ENCODE measurements at regions of chr21 and their contacts with region 1.

Region 1: GRCh38 chr21:42892931-42893755 is at the start of gene NDUFV3:
- DNase-seq: peak; percentile 90
- ATAC-seq: peak; percentile 97
- H3K4me3 ChIP-seq: peak within 1 kb of the TSS; percentile 84
- H3K27ac ChIP-seq: peak within 1 kb of the TSS; percentile 80
- H3K4me1 ChIP-seq: peaks cover 3% of the 10 kb centered on the region
- H3K27me3 ChIP-seq: no peaks in the 10 kb centered on the region
- CTCF ChIP-seq: no peak
- EP300 ChIP-seq: no peak
- POLR2A ChIP-seq: peak; percentile 99
- RAD21 ChIP-seq: no peak
- polyA plus RNA-seq, gene NDUFV3: 7.0 to 9.1 TPM

Region 2: DNA sequence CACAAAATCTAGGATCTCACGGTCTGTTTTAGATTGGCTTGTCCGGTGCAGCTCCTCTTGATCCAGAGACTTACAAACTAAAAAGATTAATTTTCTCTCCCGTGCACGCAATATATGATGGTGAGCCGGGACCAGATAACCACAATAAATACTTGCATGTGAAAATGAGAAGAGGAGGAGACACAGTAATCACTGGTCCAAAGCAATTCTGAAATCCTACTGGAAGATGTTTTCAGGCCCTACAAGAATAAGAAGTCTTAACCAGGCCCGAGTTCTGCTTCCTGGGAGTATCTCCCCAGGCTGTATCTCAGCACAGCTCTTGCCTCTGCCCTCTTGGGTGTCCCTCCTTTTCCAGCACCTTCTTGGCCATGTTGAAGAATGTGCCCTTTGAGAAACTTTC is 12.8 kb before region 1 on chr21:
- CTCF ChIA-PET with region 1: interaction called, 4 read pairs
- POLR2A ChIA-PET with region 1: interaction called, 10 read pairs
- RAD21 ChIA-PET with region 1: interaction called, 6 read pairs
- SMC1A ChIA-PET with region 1: interaction called, 3 read pairs
- in situ Hi-C with region 1: no loop called
- intact Hi-C with region 1: no loop called
- DNase-seq: no peak
- ATAC-seq: no peak
- H3K4me3 ChIP-seq: peak overlapping the region; percentile 83
- H3K27ac ChIP-seq: peak overlapping the region; percentile 93
- H3K4me1 ChIP-seq: 0 out of 2 replicates have a peak, but pooled peaks cover 2% of the 10 kb centered on the region
- H3K27me3 ChIP-seq: no peaks in the 10 kb centered on the region
- CTCF ChIP-seq: no peak
- EP300 ChIP-seq: no peak
- POLR2A ChIP-seq: no peak
- RAD21 ChIP-seq: no peak

Region 3: DNA sequence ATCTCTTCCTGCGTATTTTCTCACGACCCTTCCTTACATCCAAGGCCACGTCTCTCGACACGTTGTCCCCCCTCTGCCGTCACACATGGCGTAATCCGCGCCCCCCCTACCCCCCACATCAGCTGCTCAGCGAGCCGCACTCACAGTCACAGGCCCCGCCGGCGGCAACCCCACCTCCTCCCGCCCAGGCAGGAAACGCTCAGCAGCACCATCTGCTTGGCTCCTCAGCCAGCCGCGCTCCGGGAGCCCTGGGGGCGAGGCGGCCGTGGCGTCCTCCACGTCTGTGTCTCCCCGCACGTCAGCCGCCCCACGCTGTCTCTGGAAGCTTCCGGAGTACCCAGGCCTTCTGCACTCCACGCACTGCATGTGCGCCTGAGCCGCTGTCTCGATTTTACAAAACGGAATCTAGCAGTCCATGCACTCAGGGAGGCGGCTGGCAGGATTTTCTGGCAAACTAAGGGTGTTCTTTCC is 469.2 kb after region 1 on chr21:
- CTCF ChIA-PET with region 1: no interaction called
- POLR2A ChIA-PET with region 1: no interaction called
- RAD21 ChIA-PET with region 1: no interaction called
- SMC1A ChIA-PET with region 1: no interaction called
- in situ Hi-C with region 1: no loop called
- intact Hi-C with region 1: no loop called
- DNase-seq: no peak
- ATAC-seq: peak; percentile 69
- H3K4me3 ChIP-seq: peak overlapping the region; percentile 30; the same call in 1 of the 2 replicates
- H3K27ac ChIP-seq: peak overlapping the region; percentile 77
- H3K4me1 ChIP-seq: peaks cover 41% of the 10 kb centered on the region
- H3K27me3 ChIP-seq: no peaks in the 10 kb centered on the region; a peak in 1 of 4 replicates
- CTCF ChIP-seq: no peak
- EP300 ChIP-seq: no peak
- POLR2A ChIP-seq: no peak
- RAD21 ChIP-seq: no peak

Measured in GM12878 (cell line).